ENCODE measurements at regions of chr2 and their contacts with region 1.

Region 1: GRCh38 chr2:64653349-64654062 is at the start of gene SERTAD2:
- DNase-seq: peak; percentile 87
- H3K4me3 Mint-ChIP-seq: peak within 1 kb of the TSS; percentile 91
- H3K27ac Mint-ChIP-seq: peak within 1 kb of the TSS; percentile 86
- H3K4me1 Mint-ChIP-seq: peaks cover 48% of the 10 kb centered on the region
- H3K27me3 Mint-ChIP-seq: peaks cover 11% of the 10 kb centered on the region
- total RNA-seq, gene SERTAD2: 16.2 to 17.5 TPM

Region 2: GRCh38 chr2:64439194-64439593 is 214.3 kb before region 1 on chr2:
- CTCF ChIA-PET with region 1: no interaction called
- POLR2A ChIA-PET with region 1: no interaction called
- DNase-seq: no peak
- H3K4me3 Mint-ChIP-seq: no peak overlapping the region
- H3K27ac Mint-ChIP-seq: no peak overlapping the region
- H3K4me1 Mint-ChIP-seq: no peaks in the 10 kb centered on the region
- H3K27me3 Mint-ChIP-seq: peaks cover 39% of the 10 kb centered on the region

Region 3: DNA sequence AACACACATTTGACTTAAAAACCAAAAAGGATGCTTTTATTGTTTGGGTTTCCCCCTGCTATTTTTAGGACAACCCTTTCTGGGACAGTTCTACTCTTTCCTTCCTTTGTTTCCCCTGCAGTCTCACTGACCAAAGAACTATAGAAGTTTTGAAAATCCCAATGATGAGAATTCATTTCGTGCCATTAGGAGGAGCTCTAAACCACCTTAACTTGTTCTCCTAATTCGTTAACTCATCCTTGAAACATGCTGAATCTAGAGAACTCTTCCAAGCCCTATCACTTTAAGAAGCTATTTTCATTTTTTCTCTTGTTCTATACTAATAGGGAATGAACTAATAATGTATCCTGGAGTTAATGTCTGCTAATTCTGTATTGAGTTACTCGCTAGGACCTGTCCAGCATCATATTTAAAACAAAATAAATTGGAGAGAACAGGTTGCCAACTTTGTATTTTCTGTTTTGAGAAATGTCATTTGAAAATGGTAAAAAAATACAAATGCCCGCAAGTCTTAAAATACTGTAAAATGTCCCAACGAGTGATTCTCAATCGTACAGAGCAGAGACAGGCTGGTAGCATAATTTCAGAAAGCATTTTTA is 66.5 kb before region 1 on chr2:
- CTCF ChIA-PET with region 1: interaction called, 14 read pairs
- POLR2A ChIA-PET with region 1: no interaction called
- DNase-seq: no peak
- H3K4me3 Mint-ChIP-seq: no peak overlapping the region
- H3K27ac Mint-ChIP-seq: no peak overlapping the region
- H3K4me1 Mint-ChIP-seq: peaks cover 9% of the 10 kb centered on the region
- H3K27me3 Mint-ChIP-seq: no peaks in the 10 kb centered on the region

Region 4: DNA sequence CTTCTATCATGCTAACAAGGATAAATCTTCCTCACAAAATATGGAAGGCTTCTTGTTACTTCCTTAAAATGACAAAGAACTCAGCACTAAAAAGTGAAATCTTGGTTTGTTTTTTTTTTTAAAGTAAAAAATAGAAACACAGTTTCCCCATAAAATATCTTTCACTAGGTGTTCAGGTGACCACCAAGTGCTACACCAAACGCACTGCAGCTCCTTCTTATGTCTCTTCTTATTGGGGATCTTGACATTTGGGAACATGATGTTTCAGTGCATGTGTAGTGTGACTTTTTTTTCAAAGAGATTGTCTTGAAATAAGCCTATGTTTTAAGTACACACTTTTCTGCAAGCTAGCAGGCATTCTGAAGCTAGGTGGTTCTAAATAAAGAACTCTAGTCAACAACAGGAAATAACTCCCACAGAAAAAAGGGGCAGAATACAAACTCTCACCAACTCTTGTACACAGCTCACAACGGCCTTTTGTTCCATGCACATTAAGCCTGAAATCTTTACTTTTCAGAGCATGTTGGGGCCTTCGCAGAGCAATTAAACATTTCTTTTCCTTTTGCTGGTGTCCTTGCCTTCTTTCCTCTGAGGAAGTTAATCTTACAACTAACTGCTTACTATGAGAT is 13.4 kb after region 1 on chr2:
- CTCF ChIA-PET with region 1: interaction called, 26 read pairs
- POLR2A ChIA-PET with region 1: interaction called, 32 read pairs
- DNase-seq: no peak
- H3K4me3 Mint-ChIP-seq: no peak overlapping the region
- H3K27ac Mint-ChIP-seq: peak overlapping the region; percentile 3
- H3K4me1 Mint-ChIP-seq: peaks cover 18% of the 10 kb centered on the region
- H3K27me3 Mint-ChIP-seq: peaks cover 3% of the 10 kb centered on the region

Region 5: GRCh38 chr2:64730551-64731262 is 77.2 kb after region 1 on chr2:
- CTCF ChIA-PET with region 1: interaction called, 50 read pairs
- POLR2A ChIA-PET with region 1: interaction called, 63 read pairs
- DNase-seq: peak; percentile 45
- H3K4me3 Mint-ChIP-seq: peak overlapping the region; percentile 74
- H3K27ac Mint-ChIP-seq: peak overlapping the region; percentile 84
- H3K4me1 Mint-ChIP-seq: peaks cover 52% of the 10 kb centered on the region
- H3K27me3 Mint-ChIP-seq: peaks cover 2% of the 10 kb centered on the region

Region 6: DNA sequence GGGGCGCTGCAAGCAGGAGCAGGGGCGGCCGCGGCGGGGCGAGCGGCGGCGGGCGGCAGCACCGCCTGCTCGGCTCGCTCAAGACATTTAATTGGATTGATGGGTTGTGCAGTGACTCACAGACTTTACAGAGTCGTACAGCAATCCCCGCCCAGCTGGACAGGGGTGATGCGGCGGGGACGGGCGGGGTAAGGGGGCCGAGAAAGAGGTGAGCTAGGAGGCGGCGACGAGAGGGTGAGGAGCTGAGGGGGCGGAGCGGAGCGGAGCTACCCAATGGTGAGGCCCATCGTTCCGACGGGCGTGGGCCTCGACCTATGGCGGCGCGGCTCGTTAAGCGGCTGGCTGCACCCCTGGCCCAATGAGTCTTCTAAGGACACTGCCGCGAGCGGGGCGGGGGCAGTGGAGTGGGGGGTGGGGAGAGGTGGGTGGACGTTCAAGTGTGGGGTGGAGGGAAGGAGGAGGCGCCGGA is 97.3 kb after region 1 on chr2:
- CTCF ChIA-PET with region 1: interaction called, 91 read pairs
- POLR2A ChIA-PET with region 1: interaction called, 87 read pairs
- DNase-seq: peak; percentile 98
- H3K4me3 Mint-ChIP-seq: peak overlapping the region; percentile 84
- H3K27ac Mint-ChIP-seq: peak overlapping the region; percentile 94
- H3K4me1 Mint-ChIP-seq: peaks cover 23% of the 10 kb centered on the region
- H3K27me3 Mint-ChIP-seq: no peaks in the 10 kb centered on the region

Region 7: GRCh38 chr2:64819774-64820696 is 166.5 kb after region 1 on chr2:
- CTCF ChIA-PET with region 1: interaction called, 18 read pairs
- POLR2A ChIA-PET with region 1: interaction called, 7 read pairs
- DNase-seq: peak; percentile 63
- H3K4me3 Mint-ChIP-seq: peak overlapping the region; percentile 21
- H3K27ac Mint-ChIP-seq: peak overlapping the region; percentile 89
- H3K4me1 Mint-ChIP-seq: peaks cover 25% of the 10 kb centered on the region
- H3K27me3 Mint-ChIP-seq: no peaks in the 10 kb centered on the region

Region 8: GRCh38 chr2:64865073-64865830 is 211.7 kb after region 1 on chr2:
- CTCF ChIA-PET with region 1: interaction called, 14 read pairs
- POLR2A ChIA-PET with region 1: interaction called, 15 read pairs
- DNase-seq: peak; percentile 69
- H3K4me3 Mint-ChIP-seq: peak overlapping the region; percentile 66
- H3K27ac Mint-ChIP-seq: no peak overlapping the region
- H3K4me1 Mint-ChIP-seq: peaks cover 1% of the 10 kb centered on the region
- H3K27me3 Mint-ChIP-seq: peaks cover 8% of the 10 kb centered on the region

Measured in activated CD4-positive, alpha-beta memory T cell treated with anti-CD3 and anti-CD28 coated beads, Interleukin-2, amount 10 ng/mL, durations not matched to agents 7 days and 5 days (primary cell).